ENCODE measurements at regions of chr9 and their contacts with region 1.

Region 1: DNA sequence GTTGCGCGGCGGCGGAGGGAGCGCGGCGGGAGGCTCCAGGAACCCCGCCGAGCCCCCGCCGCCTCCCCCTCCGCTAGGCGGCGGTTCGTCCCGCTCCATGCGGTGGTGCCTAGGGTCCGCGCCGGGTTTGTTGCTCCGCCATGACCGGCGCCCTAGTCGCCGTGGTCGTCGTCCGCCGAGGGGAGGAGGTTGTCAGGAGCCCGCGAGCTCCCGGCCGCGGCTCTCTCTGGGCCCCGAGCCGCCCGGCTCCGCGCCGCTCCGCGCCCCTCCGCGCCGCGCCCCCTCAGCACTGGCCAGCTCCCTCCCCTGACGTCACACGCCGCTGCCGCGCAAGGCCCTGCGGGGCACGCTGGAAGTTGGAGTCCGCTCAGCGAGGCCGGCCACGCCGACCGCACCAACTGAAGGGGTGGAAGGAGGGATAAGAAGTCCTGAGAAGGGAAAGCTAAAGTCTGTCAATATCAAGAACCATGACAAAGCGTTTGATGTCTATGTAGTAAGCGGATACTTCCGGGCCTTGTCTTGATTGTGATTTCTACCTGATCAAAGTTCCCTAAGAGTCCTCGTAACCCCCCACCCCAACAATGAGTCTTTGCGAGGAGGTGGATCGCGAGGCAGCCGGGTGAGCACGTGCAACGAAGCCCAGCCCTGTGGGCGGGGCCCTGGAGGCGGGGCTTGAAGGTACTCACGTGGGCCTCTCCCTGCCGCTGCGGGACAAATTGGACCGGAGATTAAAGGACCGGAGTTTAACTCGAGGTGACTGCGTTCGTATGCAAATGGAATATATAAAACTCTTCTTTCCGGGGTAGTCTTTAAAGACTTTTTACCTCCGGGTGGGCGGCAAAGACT is at the start of gene NR6A1:
- DNase-seq: peak; percentile 98 to 99 (median 98)
- ATAC-seq: peak; percentile 89
- H3K4me3 ChIP-seq: peak within 1 kb of the TSS; percentile 79
- H3K4me1 ChIP-seq: peaks cover 21% of the 10 kb centered on the region
- CTCF ChIP-seq: no peak
- total RNA-seq, gene NR6A1: 5.6 to 8.4 (median 7.0) TPM

Region 2: DNA sequence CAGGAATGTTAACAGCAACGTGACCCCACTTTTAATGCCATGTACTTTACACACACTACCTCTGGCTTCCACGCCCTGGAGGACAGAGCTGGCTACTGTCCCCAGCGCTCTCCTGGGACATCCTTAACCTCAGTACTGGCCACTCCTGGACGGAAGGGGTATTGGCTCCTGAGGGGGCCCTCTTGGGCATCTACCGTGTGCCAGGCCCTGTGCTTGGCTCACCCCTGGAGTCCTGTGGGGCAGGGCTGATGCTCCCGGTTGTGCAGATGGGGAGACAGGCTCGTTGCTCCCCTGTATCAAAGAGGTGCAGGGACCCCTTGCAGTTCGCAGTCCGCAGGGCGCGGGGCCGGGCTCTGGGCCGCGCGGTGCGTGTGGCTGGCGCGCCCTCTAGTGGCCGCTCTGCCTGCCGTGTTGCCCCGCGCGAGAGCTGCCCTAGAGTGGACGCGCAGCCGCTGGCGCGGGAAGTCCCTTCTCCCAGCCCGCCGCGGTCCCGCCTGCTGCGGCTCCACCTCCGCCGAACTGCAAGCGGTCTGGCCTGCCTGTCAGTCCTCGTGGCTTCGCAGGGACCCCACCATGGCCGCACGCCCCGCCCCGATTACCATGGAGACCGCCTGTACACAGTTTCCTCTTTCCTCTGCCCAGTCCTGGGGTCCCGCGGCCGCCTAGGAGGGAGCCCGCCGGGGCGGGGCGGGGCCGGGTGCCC is 81.7 kb after region 1 on chr9 and contains the start of gene WDR38:
- intact Hi-C with region 1: loop called (anchors 2 kb)
- DNase-seq: peak; percentile 81 to 86 (median 83)
- ATAC-seq: peak; percentile 93
- H3K4me3 ChIP-seq: no peak within 1 kb of the TSS
- H3K4me1 ChIP-seq: peaks cover 14% of the 10 kb centered on the region
- CTCF ChIP-seq: peak; percentile 85
- total RNA-seq, gene WDR38: not detected

Region 3: GRCh38 chr9:125008599-125008998 is 237.4 kb after region 1 on chr9:
- intact Hi-C with region 1: no loop called
- DNase-seq: no peak
- ATAC-seq: no peak
- H3K4me3 ChIP-seq: no peak overlapping the region
- H3K4me1 ChIP-seq: no peaks in the 10 kb centered on the region
- CTCF ChIP-seq: no peak

Region 4: GRCh38 chr9:125143375-125144090 is 372.3 kb after region 1 on chr9 and contains the start of gene SCAI:
- intact Hi-C with region 1: loop called in 1 of 2 experiments (anchors 5 kb)
- DNase-seq: peak; percentile 99 to 100 (median 99)
- ATAC-seq: peak; percentile 99
- H3K4me3 ChIP-seq: peak within 1 kb of the TSS; percentile 44
- H3K4me1 ChIP-seq: peaks cover 6% of the 10 kb centered on the region
- CTCF ChIP-seq: peak; percentile 99
- total RNA-seq, gene SCAI: 6.3 to 11.7 (median 8.8) TPM

Region 5: GRCh38 chr9:125374443-125375309 is 603.4 kb after region 1 on chr9:
- intact Hi-C with region 1: loop called in 1 of 2 experiments (anchors 5 kb)
- DNase-seq: peak; percentile 44 to 68 (median 60)
- ATAC-seq: peak; percentile 88
- H3K4me3 ChIP-seq: no peak overlapping the region
- H3K4me1 ChIP-seq: peaks cover 5% of the 10 kb centered on the region
- CTCF ChIP-seq: peak; percentile 46